Activated naive CD4-positive, alpha-beta T cell treated with anti-CD3 and anti-CD28 coated beads for 36 hours (primary cell): ENCODE measurements at regions of chr17 and their contacts with region 1.

Region 1: DNA sequence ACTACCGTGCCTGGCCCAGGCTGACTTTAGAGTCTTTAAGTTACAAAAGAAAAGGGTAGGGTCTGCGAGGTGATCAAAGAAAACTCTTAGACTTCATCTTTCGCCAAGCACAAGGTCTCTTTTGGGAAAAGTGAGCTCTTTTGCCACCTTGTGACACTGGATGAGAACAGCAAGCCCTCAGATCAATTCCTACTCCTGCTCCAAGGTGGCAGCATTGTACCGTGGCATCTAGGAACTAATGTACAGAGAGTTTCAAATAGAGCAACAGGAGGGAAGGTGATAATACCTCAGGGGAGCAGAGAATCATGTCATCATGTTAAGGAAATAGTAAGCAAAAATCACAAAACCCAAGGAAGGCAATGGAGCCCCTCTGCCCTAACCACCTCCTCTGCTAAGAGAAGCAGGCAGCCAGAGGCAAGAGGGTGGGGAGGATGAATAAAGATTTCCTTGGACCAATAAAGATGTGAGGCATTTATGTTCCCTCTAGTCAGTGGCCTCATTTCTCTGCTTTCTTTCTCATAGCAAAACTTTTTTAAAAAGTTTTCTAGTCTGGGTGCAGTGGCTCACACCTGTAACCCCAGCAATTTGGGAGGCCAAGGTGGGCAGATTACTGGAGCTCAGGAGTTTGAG is 2.1 kb upstream of the C17orf78 start:
- DNase-seq: peak; percentile 89
- H3K4me3 Mint-ChIP-seq: no peak overlapping the region
- H3K27ac Mint-ChIP-seq: no peak overlapping the region
- H3K4me1 Mint-ChIP-seq: peaks cover 7% of the 10 kb centered on the region
- H3K27me3 Mint-ChIP-seq: no peaks in the 10 kb centered on the region

Region 2: GRCh38 chr17:36629252-36629847 is 744.3 kb before region 1 on chr17:
- CTCF ChIA-PET with region 1: interaction called, 4 read pairs
- intact Hi-C with region 1: loop called (anchors 1 kb)
- DNase-seq: peak; percentile 87
- H3K4me3 Mint-ChIP-seq: no peak overlapping the region
- H3K27ac Mint-ChIP-seq: no peak overlapping the region
- H3K4me1 Mint-ChIP-seq: no peaks in the 10 kb centered on the region
- H3K27me3 Mint-ChIP-seq: no peaks in the 10 kb centered on the region

Region 3: DNA sequence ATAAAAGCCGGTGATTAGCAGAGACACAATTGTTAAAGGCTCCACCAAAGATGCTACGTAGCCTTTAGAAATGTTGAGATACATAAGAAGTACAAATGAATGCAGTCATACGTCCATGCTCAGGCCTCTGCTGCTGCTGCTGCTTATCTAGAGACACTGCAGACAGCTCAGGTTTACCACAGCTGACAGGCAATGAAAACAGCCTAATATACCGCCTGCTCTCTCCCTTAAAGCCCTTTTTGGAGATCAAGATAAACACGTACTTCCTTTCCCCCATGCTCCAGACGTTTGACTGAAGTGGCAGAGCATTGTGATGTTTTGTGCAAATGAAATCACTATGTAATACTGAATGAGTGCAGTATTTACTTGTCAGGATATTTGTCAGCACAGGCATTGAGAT is 239.6 kb before region 1 on chr17:
- CTCF ChIA-PET with region 1: no interaction called
- intact Hi-C with region 1: no loop called
- DNase-seq: no peak
- H3K4me3 Mint-ChIP-seq: no peak overlapping the region
- H3K27ac Mint-ChIP-seq: no peak overlapping the region
- H3K4me1 Mint-ChIP-seq: peaks cover 2% of the 10 kb centered on the region
- H3K27me3 Mint-ChIP-seq: no peaks in the 10 kb centered on the region

Region 4: GRCh38 chr17:37392024-37392590 is 18.5 kb after region 1 on chr17:
- CTCF ChIA-PET with region 1: interaction called, 64 read pairs
- intact Hi-C with region 1: loop called (anchors 1 kb)
- DNase-seq: no peak
- H3K4me3 Mint-ChIP-seq: no peak overlapping the region
- H3K27ac Mint-ChIP-seq: no peak overlapping the region
- H3K4me1 Mint-ChIP-seq: peaks cover 17% of the 10 kb centered on the region
- H3K27me3 Mint-ChIP-seq: no peaks in the 10 kb centered on the region

Region 5: DNA sequence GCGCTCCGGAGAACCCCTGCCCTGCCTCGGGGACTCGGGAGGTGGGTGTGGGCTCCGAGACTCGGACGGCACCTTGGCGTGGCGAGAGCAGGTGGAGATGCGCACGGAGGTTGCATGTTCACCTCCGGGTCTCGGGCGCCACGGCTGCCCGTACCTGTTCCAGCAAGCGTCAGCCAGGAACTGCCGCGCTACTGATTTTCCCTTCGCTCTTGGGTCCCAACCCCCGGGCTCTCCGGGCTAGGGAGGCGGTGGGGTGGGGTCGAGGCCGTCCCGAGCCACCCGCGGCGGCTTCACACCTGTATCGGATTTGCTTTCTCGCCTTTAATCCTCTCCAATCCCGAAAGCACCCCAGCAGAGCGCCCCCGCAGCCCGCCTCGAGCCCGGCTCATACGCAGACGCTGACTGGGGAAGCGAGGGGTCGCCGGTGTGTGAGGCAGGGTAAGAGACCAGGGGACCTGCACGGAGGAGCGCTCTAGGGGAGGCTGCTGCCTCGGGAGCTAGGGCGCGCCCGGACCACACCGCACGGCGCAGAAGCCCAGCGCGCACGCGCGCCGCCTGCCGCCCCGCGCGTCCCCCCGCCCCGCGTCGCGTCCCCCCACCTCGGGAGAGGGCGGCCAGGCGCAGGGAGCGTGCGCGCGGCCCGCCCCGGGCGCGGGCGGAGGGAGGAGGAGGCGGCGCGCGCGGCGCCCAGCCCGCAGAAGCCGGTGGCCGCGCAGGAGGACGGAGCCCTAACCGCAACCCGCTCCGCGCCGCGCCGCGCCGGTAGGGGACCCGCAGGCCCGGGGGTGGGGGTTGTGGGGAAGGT is 115.8 kb after region 1 on chr17 and contains the start of gene DUSP14:
- CTCF ChIA-PET with region 1: interaction called, 6 read pairs
- intact Hi-C with region 1: loop called (anchors 1 kb)
- DNase-seq: peak; percentile 71
- H3K4me3 Mint-ChIP-seq: peak within 1 kb of the TSS; percentile 94
- H3K27ac Mint-ChIP-seq: peak within 1 kb of the TSS; percentile 76
- H3K4me1 Mint-ChIP-seq: peaks cover 48% of the 10 kb centered on the region
- H3K27me3 Mint-ChIP-seq: no peaks in the 10 kb centered on the region
- total RNA-seq, gene DUSP14: 7.0 to 7.9 TPM

Region 6: GRCh38 chr17:37570527-37571093 is 197.0 kb after region 1 on chr17:
- CTCF ChIA-PET with region 1: interaction called, 3 read pairs
- intact Hi-C with region 1: loop called (anchors 1 kb)
- DNase-seq: peak; percentile 62
- H3K4me3 Mint-ChIP-seq: no peak overlapping the region
- H3K27ac Mint-ChIP-seq: no peak overlapping the region
- H3K4me1 Mint-ChIP-seq: no peaks in the 10 kb centered on the region
- H3K27me3 Mint-ChIP-seq: no peaks in the 10 kb centered on the region

Region 7: DNA sequence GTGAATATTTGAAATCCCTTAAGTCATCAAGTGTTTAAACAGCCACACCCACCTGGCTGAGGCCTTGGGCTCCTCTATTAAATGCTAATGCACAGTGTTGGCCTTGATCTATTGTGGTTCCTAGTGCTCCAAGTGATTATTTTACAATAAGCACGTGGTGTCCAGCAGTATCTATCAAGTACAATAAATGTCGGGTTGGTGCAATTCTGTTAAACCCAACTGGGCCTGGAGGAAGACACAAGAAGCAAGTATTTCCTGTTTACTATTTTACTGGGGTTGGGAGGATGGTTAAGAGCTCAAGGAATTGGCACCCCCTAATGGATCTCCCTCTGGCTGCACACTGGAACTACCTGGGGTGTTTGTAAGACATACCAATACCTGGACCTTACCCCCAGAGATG is 443.3 kb after region 1 on chr17:
- CTCF ChIA-PET with region 1: interaction called, 4 read pairs
- intact Hi-C with region 1: loop called (anchors 1 kb)
- DNase-seq: no peak
- H3K4me3 Mint-ChIP-seq: no peak overlapping the region
- H3K27ac Mint-ChIP-seq: no peak overlapping the region
- H3K4me1 Mint-ChIP-seq: no peaks in the 10 kb centered on the region
- H3K27me3 Mint-ChIP-seq: peaks cover 14% of the 10 kb centered on the region